Activated CD8-positive, alpha-beta memory T cell treated with anti-CD3 and anti-CD28 coated beads, Interleukin-2, amount 10 ng/mL, durations not matched to agents 7 days and 5 days (primary cell): ENCODE measurements at regions of chr1 and their contacts with region 1.

Region 1: DNA sequence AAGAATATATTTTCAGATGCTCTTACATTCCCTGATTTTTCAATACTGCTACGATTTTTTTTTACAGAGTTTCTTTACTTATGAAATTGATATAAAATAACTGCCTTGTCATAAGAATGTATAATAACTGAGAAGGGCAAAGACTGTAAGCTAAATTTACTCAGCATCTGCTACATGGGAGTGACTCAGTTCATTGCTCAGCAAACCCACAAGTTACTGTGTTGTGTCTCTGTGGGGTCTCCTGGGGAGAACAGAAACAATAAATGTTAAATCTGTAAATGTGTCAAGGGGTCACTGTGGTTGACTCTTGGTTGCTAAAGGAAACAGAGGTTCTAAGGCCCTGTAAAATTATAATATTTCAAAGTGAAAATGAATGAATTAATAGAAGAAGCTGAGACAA is 210.3 kb upstream of the CACYBP start:
- DNase-seq: peak; percentile 48
- ATAC-seq: peak; percentile 78
- H3K4me3 Mint-ChIP-seq: no peak overlapping the region
- H3K27ac Mint-ChIP-seq: peak overlapping the region; percentile 21
- H3K4me1 Mint-ChIP-seq: peaks cover 24% of the 10 kb centered on the region
- H3K27me3 Mint-ChIP-seq: peaks cover 11% of the 10 kb centered on the region

Region 2: DNA sequence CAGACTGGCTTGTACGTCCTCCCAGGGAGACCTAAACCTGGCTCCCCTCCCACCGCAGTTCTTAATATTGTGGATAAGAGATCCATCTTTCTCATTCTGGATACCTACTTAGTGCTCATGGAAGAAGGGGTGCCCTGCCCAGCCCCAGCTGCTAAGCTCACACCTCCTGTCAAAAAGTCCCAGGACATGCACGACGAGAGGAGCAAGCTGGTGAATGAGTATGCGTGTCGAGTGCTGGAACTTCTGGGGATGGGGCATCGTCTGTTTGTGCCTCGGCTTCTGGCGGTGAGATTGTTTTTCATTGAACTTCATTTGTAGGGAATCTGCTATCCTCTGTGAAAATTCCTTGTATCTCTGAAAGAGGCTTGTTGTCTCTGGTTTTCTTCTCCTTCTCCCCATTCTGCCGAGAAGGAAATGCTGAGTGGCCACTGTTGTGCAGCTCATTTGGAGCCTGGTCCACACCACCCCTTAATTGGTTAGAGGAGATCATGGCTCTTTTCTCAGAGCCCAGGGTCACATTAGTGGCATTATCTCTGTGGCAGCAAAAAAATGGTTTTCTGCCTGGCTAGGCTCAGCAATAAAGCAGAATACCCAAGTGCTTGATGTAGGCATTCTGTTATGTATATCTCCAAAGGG is 10.9 kb after region 1 on chr1:
- CTCF ChIA-PET with region 1: interaction called, 12 read pairs
- DNase-seq: peak; percentile 43
- ATAC-seq: peak; percentile 28
- H3K4me3 Mint-ChIP-seq: no peak overlapping the region
- H3K27ac Mint-ChIP-seq: no peak overlapping the region
- H3K4me1 Mint-ChIP-seq: peaks cover 12% of the 10 kb centered on the region
- H3K27me3 Mint-ChIP-seq: no peaks in the 10 kb centered on the region